Ovary (tissue), 10 donors: ENCODE measurements at regions of chr12 and their contacts with region 1.

Region 1: GRCh38 chr12:569803-570434 is 93.3 kb downstream of the NINJ2 start:
- DNase-seq: peak; percentile 86 to 95 (median 93)
- H3K4me3 ChIP-seq: peak overlapping the region; percentile 55
- H3K27ac ChIP-seq: peak overlapping the region; percentile 78 to 88
- H3K4me1 ChIP-seq: peaks cover 12% of the 10 kb centered on the region
- H3K27me3 ChIP-seq: no peaks in the 10 kb centered on the region
- CTCF ChIP-seq: peak; percentile 90 to 96 (median 96)
- EP300 ChIP-seq: no peak
- POLR2A ChIP-seq: peak; percentile 21

Region 2: DNA sequence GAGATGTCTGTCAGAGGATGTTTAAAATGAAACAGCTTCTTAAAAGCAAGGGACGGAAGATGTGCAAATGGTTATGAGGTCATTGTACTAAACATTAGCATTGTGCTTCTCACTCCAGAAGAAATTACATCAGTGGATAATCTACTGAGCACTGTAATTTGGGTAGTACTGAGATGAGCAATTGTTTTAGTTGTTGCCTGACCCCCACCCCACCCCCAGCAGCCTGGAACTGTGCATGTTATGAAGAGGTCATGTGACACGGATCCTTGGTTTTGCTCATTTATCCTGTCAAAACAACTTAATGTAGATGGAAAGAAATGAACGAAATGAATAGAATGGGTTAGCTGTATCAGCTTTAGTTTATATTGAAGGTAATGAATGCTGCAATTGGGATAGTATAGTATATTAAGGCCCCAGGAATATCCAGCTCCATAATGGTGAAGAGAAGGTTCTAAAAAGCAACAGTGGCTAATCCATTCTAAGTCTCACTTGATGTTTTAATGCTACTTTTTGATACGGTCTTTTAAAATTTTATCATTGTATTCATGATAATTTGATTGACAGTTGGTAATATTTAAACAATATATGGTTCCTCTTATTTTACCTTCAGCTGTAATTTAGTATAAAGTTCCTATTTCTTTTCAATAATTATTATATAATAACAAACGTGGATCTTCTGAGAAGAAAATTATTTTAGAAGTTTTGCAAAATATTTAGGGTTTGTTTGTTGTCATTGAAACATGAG is 240.9 kb after region 1 on chr12:
- intact Hi-C with region 1: loop called (anchors 5 kb)
- DNase-seq: no peak
- H3K4me3 ChIP-seq: no peak overlapping the region
- H3K27ac ChIP-seq: no peak overlapping the region
- H3K4me1 ChIP-seq: peaks cover 3% of the 10 kb centered on the region
- H3K27me3 ChIP-seq: no peaks in the 10 kb centered on the region
- CTCF ChIP-seq: no peak
- EP300 ChIP-seq: no peak
- POLR2A ChIP-seq: no peak

Region 3: DNA sequence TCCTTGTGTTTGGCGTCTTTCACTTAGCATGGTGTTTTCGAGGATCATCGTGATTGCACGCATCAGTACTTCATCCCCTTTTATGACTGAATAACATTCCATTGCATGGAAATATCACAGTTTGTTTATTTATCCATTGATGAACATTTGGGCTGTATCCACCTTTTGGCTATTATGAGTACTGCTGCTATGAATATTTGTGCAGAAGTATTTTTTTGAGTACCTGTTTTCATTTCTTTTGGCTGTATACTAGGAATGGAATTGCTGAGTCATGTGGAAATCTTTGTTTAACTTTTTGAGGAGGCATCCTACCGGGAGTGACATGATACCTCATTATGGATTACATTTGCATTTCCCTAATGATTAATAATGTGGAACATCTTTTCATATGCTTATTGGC is 248.8 kb after region 1 on chr12:
- intact Hi-C with region 1: loop called (anchors 5 kb)
- DNase-seq: no peak
- H3K4me3 ChIP-seq: no peak overlapping the region
- H3K27ac ChIP-seq: no peak overlapping the region
- H3K4me1 ChIP-seq: peaks cover 5% of the 10 kb centered on the region
- H3K27me3 ChIP-seq: no peaks in the 10 kb centered on the region
- CTCF ChIP-seq: no peak
- EP300 ChIP-seq: no peak
- POLR2A ChIP-seq: no peak

Region 4: DNA sequence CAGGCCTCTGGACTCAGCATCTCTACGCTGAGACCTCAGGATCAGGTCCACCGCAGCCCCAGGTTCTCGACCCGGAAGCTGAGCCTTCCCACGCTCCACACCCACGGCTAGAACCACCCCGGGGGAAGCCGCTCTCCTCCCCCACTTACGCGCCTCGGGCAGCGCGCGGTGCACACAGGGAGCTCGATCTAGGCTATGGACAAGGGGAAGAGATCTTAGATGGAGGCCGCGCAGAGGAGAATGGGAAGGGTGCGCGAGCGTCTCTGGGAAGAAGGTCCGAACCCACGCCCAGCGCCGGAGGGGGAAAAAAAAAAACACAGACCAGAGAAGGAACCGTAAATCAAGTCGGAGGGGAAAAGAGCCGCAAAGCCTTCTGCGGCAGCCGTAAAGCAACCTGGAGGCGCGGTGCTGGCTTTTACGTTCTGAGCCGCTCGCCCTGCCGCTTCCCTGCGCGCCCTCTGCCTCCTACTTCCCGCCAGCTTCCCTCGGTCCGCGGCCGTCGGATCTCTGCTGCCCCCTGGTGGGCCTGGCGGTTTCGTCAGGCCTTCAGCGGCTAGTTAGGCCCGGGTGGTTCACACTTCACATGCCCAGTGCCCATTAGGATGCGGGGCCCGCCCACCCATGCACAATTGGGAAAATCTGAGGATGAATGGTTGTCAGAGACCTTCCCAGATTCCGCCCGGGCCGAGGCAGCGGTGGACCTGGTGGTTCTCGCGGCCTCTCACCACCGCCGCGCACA is 379.7 kb after region 1 on chr12 and contains the start of gene RAD52:
- intact Hi-C with region 1: loop called in 2 of 4 experiments (anchors 2 to 5 kb)
- DNase-seq: peak; percentile 97 to 99 (median 98)
- H3K4me3 ChIP-seq: peak within 1 kb of the TSS; percentile 75
- H3K27ac ChIP-seq: peak within 1 kb of the TSS; percentile 69 to 88
- H3K4me1 ChIP-seq: peaks cover 10% of the 10 kb centered on the region
- H3K27me3 ChIP-seq: no peaks in the 10 kb centered on the region
- CTCF ChIP-seq: peak; percentile 99
- EP300 ChIP-seq: no peak
- POLR2A ChIP-seq: peak; percentile 71
- total RNA-seq, gene RAD52: 11.4 to 20.2 (median 13.0) TPM

Region 5: GRCh38 chr12:1093166-1093751 is 523.3 kb after region 1 on chr12:
- intact Hi-C with region 1: loop called in 1 of 4 experiments (anchors 10 kb)
- DNase-seq: peak in 1 of 5 donors; percentile 27
- H3K4me3 ChIP-seq: no peak overlapping the region
- H3K27ac ChIP-seq: no peak overlapping the region
- H3K4me1 ChIP-seq: peaks cover 1% of the 10 kb centered on the region
- H3K27me3 ChIP-seq: no peaks in the 10 kb centered on the region
- CTCF ChIP-seq: peak in 2 of 3 donors; percentile 44 to 51
- EP300 ChIP-seq: no peak
- POLR2A ChIP-seq: no peak

Region 6: DNA sequence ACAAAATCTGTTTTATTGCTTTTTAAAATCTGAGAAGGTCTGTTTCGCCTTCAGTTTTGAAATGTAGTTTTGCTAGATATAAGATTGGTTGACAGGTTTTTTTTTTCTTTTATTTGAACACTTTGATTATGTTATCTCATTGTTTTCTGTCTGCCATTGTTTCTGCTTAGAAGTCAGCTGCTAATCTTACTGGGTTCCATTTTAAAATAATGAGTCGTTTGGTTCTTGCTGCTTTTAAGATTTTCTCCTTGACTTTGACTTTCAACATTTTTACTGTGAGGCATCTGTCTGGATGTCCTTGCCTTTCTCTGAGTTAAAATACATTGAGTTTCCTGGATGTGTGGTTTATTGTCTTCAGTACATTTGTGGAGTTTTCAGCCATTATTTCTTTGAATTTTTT is 1177.7 kb after region 1 on chr12:
- intact Hi-C with region 1: no loop called
- DNase-seq: no peak
- H3K4me3 ChIP-seq: no peak overlapping the region
- H3K27ac ChIP-seq: no peak overlapping the region
- H3K4me1 ChIP-seq: no peaks in the 10 kb centered on the region
- H3K27me3 ChIP-seq: no peaks in the 10 kb centered on the region
- CTCF ChIP-seq: no peak
- EP300 ChIP-seq: no peak
- POLR2A ChIP-seq: no peak